ENCODE measurements at regions of chr17 and their contacts with region 1.

Region 1: DNA sequence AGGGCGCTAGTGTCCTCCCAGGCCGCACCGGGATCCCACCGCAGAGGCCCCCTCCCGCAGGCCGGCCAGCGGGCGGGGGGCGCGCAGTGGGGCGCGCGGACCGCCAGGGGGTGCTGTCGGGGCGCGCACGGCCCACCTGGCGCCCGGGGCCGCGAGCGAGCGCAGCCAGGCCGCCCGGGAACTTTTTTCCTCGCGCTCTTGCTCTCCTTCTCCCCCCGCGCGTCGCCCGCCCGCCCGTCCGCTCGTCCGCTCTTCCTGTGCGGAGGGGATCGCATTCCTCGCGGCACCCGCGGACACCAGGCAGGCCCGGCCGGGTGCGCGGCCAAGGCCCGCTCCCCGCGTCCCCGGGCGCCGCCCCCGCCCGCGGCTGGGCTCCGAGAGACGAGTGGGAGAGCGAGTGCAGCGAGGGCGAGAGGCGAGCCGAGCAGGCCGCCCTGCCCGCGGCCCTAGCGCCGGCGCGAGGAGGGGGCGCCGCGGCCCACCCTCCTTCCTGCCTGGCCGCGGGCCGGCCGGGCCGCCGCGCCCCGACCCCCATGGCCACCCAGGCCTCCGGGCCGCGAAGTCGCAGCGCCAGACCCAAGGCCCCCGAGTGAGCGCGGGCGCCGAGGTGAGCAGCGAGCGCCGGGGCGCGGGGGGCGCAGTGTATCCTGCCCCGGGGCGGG is at the start of gene RAI1:
- DNase-seq: peak in 7 of 10 donors; percentile 47 to 83 (median 71)
- H3K4me3 ChIP-seq: peak within 1 kb of the TSS; percentile 43 to 92 (median 78)
- H3K27ac ChIP-seq: peak within 1 kb of the TSS; percentile 30 to 97 (median 90)
- H3K27me3 ChIP-seq: no peaks in the 10 kb centered on the region
- CTCF ChIP-seq: peak in 54 of 56 donors; percentile 13 to 97 (median 68)
- total RNA-seq, gene RAI1: 36.4 to 86.1 (median 56.3) TPM

Region 2: GRCh38 chr17:17628388-17629008 is 52.8 kb before region 1 on chr17:
- intact Hi-C with region 1: no loop called
- DNase-seq: no peak
- H3K4me3 ChIP-seq: peak overlapping the region in 1 of 59 donors; percentile 6
- H3K27ac ChIP-seq: no peak overlapping the region
- H3K27me3 ChIP-seq: no peaks in the 10 kb centered on the region
- CTCF ChIP-seq: no peak

Region 3: DNA sequence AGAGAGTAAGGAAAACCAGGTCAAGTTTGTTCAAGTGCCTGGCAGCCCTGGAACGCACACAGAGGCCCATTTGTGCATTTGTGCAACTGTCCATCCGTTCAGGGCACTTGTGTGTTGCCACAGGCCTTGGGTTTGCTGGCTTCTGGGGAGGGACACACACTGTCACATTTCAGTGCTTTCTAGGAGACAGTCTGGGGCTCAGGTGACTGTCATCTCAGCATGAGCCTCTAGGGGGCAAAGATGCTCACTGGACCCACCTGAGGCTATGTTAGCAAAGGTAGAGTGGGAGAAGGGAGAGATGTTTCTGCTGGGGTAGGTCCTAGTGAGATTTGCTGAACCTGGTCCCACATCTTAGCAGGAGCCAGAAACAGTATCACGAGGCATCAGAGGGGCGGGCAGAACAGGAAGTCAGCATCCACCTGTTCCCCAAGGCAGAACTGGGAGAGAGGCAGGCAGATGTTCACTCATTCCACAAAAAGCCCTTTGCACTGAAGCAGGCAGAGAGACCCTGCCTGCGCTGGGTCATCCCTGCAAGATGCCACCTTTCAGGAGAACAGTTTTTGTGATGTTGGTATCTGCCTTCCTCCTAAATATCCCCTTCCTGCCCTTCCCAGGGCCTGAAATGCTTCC is 48.4 kb after region 1 on chr17:
- intact Hi-C with region 1: loop called (anchors 5 kb)
- DNase-seq: peak in 4 of 10 donors; percentile 41 to 68 (median 58)
- H3K4me3 ChIP-seq: no peak overlapping the region
- H3K27ac ChIP-seq: peak overlapping the region; percentile 16 to 93 (median 81)
- H3K27me3 ChIP-seq: no peaks in the 10 kb centered on the region
- CTCF ChIP-seq: peak in 54 of 56 donors; percentile 33 to 69 (median 56)

Region 4: DNA sequence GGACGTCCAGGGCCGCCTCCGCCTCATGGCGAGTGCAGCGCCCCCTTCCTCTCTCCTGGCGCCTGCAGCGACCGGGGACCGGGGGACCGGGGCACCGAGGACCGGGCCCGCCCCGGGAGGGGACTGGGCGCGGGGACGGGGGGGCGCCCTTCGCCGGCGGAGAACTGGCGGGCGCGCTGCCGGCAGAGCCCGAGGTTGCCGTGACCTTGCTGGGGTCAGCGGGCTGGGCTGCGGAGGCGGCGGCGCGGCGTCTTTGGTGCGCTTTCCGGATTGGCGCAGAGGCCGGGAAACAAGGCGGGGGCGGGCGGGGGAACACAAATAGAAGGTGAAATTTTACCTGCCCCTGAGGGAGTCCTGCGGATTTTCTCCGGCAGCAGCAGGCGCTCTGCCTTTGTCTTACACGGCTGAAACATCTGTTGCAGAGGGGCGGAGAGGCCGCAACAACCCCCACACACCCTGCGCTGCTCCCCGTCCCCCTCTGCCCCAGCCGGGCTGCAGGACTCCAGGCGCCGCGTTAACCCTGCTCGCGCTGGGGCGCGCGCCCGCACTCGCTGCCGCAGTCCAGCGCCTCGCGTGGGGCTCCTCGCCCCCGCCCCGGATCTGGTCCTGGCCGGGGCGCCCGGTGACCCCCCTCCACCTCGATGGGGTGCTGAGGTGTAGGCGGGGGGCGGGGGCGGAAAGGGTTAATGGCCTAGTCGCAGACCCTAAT is 102.0 kb after region 1 on chr17:
- intact Hi-C with region 1: loop called in 1 of 2 experiments (anchors 5 kb)
- DNase-seq: peak in 6 of 10 donors; percentile 51 to 72 (median 66)
- H3K4me3 ChIP-seq: peak overlapping the region; percentile 52 to 79 (median 67)
- H3K27ac ChIP-seq: peak overlapping the region; percentile 73 to 100 (median 97)
- H3K27me3 ChIP-seq: no peaks in the 10 kb centered on the region
- CTCF ChIP-seq: peak in 41 of 56 donors; percentile 12 to 62 (median 41)

Region 5: GRCh38 chr17:17812211-17813057 is 131.1 kb after region 1 on chr17:
- intact Hi-C with region 1: loop called (anchors 5 kb)
- DNase-seq: peak in 8 of 10 donors; percentile 62 to 80 (median 72)
- H3K4me3 ChIP-seq: peak overlapping the region in 2 of 59 donors; percentile 0 to 2
- H3K27ac ChIP-seq: peak overlapping the region in 58 of 59 donors; percentile 18 to 99 (median 82)
- H3K27me3 ChIP-seq: no peaks in the 10 kb centered on the region
- CTCF ChIP-seq: peak; percentile 97 to 100 (median 100)

Region 6: DNA sequence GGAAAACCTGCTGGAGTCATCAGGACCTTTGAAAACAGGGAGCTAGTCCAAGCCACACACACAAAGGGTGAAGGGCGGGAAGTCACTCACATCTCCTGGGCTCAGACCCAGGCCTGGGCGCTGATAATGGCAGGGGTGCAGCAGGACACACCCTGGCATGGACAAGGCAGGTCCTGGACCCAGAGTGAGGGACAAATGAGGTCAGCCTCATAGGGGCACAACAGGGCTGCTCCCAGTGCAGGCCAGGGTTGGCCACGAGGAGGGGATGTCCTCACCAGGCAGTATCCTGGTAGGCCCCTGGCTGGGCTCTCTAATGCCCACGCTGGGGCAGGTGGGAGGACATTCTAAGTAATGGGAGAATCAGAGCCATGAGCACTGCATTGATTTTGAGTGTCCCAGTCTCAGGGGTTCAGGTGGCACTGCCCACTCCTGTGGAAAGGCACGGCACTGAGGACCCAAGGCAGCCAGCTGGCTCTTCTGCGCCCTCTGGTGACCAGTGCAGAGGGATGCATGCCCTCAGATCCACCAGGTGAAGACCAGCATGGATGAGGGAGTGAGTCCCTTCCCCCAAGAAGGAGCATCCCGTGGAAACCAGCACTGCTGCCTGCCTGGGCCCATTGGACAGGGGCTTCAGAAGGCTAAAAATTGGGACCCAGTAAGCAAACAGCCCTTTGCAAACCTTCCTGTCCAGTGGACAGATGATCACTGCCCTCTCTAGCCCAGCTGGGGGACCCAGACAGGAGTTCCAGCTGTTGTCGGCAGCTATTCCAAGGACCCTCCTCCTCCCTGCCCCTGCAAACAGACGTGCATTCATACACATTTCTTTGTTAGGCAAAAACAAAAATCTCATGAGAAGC is 178.8 kb after region 1 on chr17:
- intact Hi-C with region 1: loop called in 1 of 2 experiments (anchors 2 kb)
- DNase-seq: peak in 9 of 10 donors; percentile 65 to 83 (median 76)
- H3K4me3 ChIP-seq: no peak overlapping the region
- H3K27ac ChIP-seq: peak overlapping the region in 51 of 59 donors; percentile 5 to 79 (median 60)
- H3K27me3 ChIP-seq: no peaks in the 10 kb centered on the region
- CTCF ChIP-seq: peak; percentile 77 to 100 (median 97)

Region 7: DNA sequence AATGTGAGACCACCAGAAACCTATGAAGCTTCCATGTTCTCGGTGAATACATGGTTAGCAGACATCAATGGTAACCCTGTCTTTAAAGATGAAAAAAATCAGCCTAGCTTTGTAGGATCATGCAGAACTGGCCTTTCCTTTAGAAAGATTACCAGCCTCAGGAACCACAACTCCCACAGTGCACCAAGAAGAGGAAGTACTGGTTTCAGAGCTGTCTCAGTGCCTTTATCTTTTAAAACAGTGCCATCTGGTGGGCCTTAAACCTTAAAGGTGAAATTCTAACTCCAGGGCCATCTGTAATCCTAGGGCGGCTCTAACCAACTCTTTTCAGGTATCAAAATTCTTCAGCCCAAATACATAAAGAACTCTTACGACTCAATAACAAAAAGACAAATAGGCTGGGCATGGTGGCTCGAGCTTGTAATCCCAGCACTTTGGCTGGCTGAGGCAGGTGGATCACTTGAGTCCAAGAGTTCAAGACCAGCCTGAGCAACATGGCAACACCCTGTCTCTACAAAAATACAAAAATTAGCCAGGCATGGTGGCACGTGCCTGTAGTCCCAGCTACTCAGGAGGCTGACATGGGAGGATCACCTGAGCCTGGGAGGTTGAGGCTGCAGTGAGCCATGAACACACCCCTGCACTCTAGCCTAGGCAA is 352.3 kb after region 1 on chr17:
- intact Hi-C with region 1: loop called in 1 of 2 experiments (anchors 2 kb)
- DNase-seq: peak in 2 of 10 donors; percentile 50 to 55
- H3K4me3 ChIP-seq: no peak overlapping the region
- H3K27ac ChIP-seq: peak overlapping the region in 1 of 59 donors; percentile 16
- H3K27me3 ChIP-seq: no peaks in the 10 kb centered on the region
- CTCF ChIP-seq: peak; percentile 51 to 85 (median 69)